A673 (cell line): ENCODE measurements at regions of chr5 and their contacts with region 1.

Region 1: GRCh38 chr5:119789406-119790117 is 160.2 kb downstream of the FAM170A start:
- DNase-seq: no peak
- H3K4me3 ChIP-seq: no peak overlapping the region
- H3K27ac ChIP-seq: no peak overlapping the region
- H3K4me1 ChIP-seq: no peaks in the 10 kb centered on the region
- H3K27me3 ChIP-seq: no peaks in the 10 kb centered on the region
- CTCF ChIP-seq: no peak

Region 2: DNA sequence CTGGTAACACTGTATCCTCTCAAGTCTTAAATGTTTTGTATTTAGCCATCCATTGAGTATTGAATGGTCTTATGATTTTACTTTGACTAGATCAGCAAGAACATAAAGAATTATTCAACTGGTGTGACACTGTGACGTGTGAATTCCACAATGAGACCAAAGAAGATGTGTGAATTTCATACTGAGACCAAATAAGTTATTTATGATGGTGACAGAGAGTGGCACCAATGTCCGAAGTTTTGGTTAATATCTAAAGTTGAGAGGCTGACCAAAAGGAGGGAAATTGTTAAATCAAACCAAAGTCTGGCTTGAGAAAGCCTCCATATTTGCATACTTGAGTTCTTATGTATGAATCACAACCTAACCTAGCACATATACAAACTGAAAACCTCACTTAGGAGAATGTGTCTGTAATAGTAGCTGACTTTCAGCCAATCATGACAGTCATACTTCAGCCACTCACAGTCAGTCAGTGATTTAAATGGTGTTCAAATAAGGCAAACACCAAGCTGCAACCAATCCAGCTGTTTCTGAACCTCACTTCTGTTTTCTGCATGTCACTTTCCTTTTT is 191.7 kb before region 1 on chr5:
- CTCF ChIA-PET with region 1: no interaction called
- POLR2A ChIA-PET with region 1: no interaction called
- intact Hi-C with region 1: no loop called
- DNase-seq: no peak
- H3K4me3 ChIP-seq: no peak overlapping the region
- H3K27ac ChIP-seq: no peak overlapping the region
- H3K4me1 ChIP-seq: no peaks in the 10 kb centered on the region
- H3K27me3 ChIP-seq: no peaks in the 10 kb centered on the region
- CTCF ChIP-seq: no peak

Region 3: DNA sequence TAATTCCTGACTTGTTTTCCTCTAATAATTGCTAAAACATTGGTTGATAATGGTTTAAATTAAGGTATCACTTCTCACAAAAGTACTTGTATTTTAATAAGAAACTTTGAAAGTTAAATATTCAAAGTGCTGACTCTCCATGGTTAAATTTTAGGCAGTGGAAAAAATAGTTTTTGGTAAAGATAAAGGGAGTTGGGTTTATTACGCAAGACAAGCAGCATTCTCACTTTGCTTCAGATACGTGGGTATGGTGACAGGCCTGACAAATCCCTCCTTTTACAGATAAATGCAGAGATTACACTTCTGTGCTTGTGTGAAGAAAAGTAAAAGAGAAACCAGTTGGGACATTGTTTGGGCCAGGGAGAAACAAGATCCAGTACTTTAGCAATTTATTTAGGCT is 174.7 kb before region 1 on chr5:
- CTCF ChIA-PET with region 1: no interaction called
- POLR2A ChIA-PET with region 1: no interaction called
- intact Hi-C with region 1: no loop called
- DNase-seq: no peak
- H3K4me3 ChIP-seq: no peak overlapping the region
- H3K27ac ChIP-seq: no peak overlapping the region
- H3K4me1 ChIP-seq: no peaks in the 10 kb centered on the region
- H3K27me3 ChIP-seq: peaks cover 5% of the 10 kb centered on the region
- CTCF ChIP-seq: no peak

Region 4: DNA sequence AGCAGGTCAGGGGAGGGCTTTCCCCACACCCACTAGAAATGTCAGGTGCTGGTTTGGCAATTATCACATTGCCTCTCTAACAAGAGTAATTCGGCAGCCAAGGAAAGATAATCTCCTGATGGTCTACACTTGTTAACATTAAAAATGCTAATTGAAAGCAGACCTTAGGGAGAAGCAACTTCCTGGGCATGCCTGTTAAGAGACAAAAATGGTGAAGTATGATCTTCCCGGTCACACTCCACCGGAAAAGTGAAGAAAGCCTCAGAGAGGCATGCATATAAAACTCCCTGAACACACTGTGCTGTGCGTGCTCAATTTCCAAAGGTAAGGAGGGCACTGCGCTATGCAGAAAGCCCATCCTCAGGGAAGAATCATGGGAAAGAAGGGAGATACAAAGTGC is 84.0 kb after region 1 on chr5:
- CTCF ChIA-PET with region 1: no interaction called
- POLR2A ChIA-PET with region 1: no interaction called
- intact Hi-C with region 1: loop called (anchors 5 kb)
- DNase-seq: peak; percentile 61
- H3K4me3 ChIP-seq: no peak overlapping the region
- H3K27ac ChIP-seq: no peak overlapping the region
- H3K4me1 ChIP-seq: no peaks in the 10 kb centered on the region
- H3K27me3 ChIP-seq: no peaks in the 10 kb centered on the region
- CTCF ChIP-seq: no peak